BJ (cell line): ENCODE measurements at regions of chr10 and their contacts with region 1.

Region 1: DNA sequence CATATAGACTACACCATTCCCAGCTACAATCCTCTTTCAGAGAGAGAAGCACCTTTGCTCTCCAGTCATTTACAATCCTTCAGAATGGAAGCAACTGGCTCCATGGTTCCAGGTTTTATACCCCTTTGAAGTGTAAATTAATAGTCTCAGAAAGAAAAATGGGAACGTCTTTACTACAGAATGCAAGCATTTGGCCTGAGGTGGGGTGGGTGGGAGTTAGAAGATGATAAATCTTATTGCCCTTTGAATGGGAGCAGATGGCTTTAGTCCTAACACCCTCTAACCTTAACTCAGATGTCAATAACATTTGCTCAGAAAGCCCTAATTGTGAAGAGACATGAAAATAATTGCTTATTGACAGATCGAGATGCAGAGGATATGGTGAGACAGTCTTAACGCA is 84.2 kb upstream of the KCNMA1 start:
- DNase-seq: no peak
- H3K4me3 ChIP-seq: no peak overlapping the region
- H3K27me3 ChIP-seq: no peaks in the 10 kb centered on the region
- CTCF ChIP-seq: no peak

Region 2: DNA sequence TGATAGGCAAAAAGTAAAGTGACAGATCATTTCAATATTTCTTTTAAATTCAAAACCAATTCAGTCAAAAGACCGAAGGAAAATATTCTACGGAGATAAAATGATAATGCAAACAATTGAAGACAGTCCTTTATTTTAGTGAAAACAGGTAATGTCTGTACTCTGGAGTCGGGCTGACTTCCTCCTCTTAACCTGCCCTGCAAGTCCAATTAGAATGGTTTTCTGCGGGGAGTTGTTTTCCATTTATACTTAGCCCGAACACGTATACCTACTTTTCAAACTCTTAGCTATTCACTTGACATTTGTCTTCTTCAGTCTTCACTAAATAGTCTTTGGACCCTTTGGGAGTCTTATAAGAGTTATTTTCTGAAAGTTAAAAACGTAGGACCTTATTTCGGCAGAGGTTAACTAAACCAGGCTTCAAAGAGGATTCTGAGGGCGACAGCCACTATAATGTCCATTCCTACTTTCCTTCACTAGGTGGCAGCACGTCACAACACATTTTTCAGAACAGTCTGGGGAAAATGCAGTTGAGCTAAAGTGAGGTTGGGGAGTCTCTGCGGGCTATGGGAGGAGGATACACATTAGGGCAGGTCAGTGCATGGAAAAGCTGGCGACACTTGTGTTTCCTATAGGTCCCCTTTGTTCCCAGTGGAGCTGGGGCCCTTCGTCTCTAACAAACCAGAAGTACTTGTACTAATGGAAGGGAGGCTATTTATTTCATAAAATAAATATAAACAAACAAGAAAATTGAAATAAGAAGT is 556.2 kb before region 1 on chr10:
- CTCF ChIA-PET with region 1: interaction called, 11 read pairs
- POLR2A ChIA-PET with region 1: no interaction called
- DNase-seq: no peak
- H3K4me3 ChIP-seq: no peak overlapping the region
- H3K27me3 ChIP-seq: no peaks in the 10 kb centered on the region
- CTCF ChIP-seq: peak; percentile 77

Region 3: DNA sequence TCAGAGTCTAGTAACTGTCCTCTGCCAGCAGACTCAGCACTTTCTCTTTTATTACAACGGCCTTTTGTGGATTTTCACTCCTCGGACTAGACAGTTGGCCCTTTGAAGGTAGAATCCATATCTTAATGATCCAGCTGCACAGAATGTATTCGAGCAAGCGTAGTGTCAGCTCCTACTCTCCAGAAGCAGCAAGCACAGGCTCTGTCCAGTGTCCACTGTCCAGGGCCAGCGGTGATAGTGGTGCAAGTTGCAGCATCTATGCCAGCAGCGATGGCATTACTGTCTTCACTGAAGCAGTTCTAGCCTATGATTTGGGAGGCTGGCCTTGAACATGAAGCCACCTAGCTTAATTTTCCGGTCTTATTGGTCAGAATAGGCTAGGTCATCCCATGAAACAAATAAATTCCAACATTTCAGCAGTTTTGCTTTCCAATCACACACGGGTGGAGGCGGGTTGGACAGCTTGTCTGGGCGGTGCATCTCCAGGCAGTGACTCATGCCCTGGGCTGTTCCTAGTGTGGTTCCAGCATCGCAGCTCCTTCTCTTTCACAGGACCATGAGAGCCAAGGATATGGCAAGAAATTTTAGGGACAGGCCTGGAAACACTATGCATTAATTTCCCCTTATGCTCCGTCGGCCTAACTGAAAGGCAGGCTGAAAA is 24.4 kb after region 1 on chr10:
- CTCF ChIA-PET with region 1: interaction called, 17 read pairs
- POLR2A ChIA-PET with region 1: no interaction called
- DNase-seq: no peak
- H3K4me3 ChIP-seq: no peak overlapping the region
- H3K27me3 ChIP-seq: no peaks in the 10 kb centered on the region
- CTCF ChIP-seq: no peak

Region 4: GRCh38 chr10:77770081-77770867 is 48.5 kb after region 1 on chr10:
- CTCF ChIA-PET with region 1: interaction called, 14 read pairs
- POLR2A ChIA-PET with region 1: no interaction called
- DNase-seq: no peak
- H3K4me3 ChIP-seq: no peak overlapping the region
- H3K27me3 ChIP-seq: no peaks in the 10 kb centered on the region
- CTCF ChIP-seq: no peak